ENCODE measurements at regions of chr4 and their contacts with region 1.

Region 1: DNA sequence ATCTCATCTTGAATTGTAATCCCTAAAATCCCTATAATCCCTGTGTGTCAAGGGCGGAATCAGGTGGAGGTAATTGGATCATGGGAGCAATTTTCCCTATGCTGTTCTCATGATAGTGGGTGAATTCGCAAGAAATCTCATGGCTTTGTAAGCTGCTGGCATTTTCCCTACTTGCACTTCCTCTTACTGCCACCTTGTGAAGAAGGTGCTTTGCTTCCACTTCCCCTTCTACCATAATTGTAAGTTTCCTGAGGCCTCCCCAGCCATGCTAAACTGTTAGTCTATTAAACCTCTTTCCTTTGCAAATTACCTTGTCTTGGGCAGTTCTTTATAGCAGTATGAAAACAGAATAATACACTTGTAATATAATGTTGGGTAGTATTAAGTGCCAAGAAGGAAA is 1087.4 kb upstream of the SLIT2 start:
- DNase-seq: no peak
- ATAC-seq: no peak
- H3K4me3 ChIP-seq: no peak overlapping the region
- H3K27ac ChIP-seq: no peak overlapping the region
- H3K4me1 ChIP-seq: no peaks in the 10 kb centered on the region
- H3K27me3 ChIP-seq: no peaks in the 10 kb centered on the region
- CTCF ChIP-seq: no peak
- EP300 ChIP-seq: no peak
- POLR2A ChIP-seq: no peak
- RAD21 ChIP-seq: no peak

Region 2: DNA sequence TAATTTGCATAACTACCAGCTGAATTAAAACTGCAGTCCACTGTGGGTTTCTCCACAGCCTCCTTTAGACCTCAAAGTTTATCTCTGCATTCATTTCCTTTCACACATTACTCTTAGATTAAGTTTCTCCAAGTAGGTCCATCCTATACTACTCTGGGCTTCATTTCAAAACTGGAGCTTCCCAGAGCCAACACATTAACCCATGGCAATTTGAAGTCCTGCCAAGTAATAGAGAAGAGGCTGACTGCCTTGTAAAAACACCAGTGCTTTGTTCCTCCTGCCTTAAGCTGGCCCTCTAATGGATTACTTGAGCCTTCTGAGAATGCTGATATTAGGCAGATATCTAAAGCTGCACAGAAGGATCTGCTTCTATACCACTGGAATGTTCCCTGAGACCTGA is 90.2 kb after region 1 on chr4:
- CTCF ChIA-PET with region 1: no interaction called
- POLR2A ChIA-PET with region 1: no interaction called
- RAD21 ChIA-PET with region 1: no interaction called
- SMC1A ChIA-PET with region 1: no interaction called
- in situ Hi-C with region 1: loop called (anchors 25 kb)
- intact Hi-C with region 1: no loop called
- DNase-seq: no peak
- ATAC-seq: no peak
- H3K4me3 ChIP-seq: no peak overlapping the region
- H3K27ac ChIP-seq: no peak overlapping the region
- H3K4me1 ChIP-seq: no peaks in the 10 kb centered on the region
- H3K27me3 ChIP-seq: no peaks in the 10 kb centered on the region
- CTCF ChIP-seq: no peak
- EP300 ChIP-seq: no peak
- POLR2A ChIP-seq: no peak
- RAD21 ChIP-seq: no peak

Measured in GM12878 (cell line).